Aorta (tissue), 5 donors: ENCODE measurements at regions of chr16 and their contacts with region 1.

Region 1: DNA sequence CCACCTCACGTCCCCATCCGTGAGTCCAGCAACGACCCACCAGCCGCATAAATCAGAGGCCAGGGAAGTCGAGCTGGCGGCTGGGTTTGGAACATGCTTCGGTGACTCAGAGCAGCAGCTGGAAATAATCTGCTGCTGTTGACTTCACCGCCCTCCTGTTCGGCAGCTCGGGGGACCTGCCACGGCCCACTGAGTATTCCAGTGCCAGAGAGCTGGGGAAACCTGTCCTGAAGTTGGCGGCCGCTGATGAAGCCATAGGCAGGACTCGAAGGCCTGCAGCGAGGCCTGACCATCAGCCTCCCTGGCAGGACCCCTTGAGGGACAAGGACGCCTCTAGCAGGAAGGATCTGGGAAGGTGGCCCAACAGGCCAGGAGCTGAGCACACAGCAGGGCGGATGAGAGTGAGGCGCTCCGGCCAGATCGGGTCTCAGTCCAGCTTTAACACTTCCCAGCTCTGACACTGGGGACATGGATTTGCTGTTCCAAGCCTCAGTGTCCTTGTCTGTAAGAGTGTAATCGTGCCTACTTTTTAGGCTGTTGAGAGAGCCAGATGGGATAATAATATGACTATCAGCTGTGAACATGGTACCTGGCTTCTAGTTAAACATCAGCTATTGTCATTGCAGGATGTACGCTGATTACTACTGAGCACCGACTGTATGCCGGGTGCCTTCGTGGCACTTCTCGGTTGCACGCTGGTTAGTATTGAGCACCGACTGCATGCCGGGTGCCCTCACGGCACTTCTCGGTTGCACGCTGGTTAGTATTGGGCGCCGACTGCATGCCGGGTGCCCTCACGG is 50.4 kb upstream of the CIBAR2 start:
- DNase-seq: peak; percentile 88 to 90
- ATAC-seq: peak; percentile 65
- H3K4me3 ChIP-seq: no peak overlapping the region
- H3K27ac ChIP-seq: peak overlapping the region in 1 of 2 donors; percentile 26
- H3K4me1 ChIP-seq: peaks cover 0 to 3% of the 10 kb centered on the region in 2 donors
- H3K27me3 ChIP-seq: no peaks in the 10 kb centered on the region

Region 2: GRCh38 chr16:85055503-85056210 is 107.0 kb before region 1 on chr16:
- intact Hi-C with region 1: no loop called
- DNase-seq: peak in 1 of 2 donors; percentile 80
- ATAC-seq: peak; percentile 80
- H3K4me3 ChIP-seq: no peak overlapping the region
- H3K27ac ChIP-seq: no peak overlapping the region
- H3K4me1 ChIP-seq: no peaks in the 10 kb centered on the region
- H3K27me3 ChIP-seq: no peaks in the 10 kb centered on the region

Region 3: GRCh38 chr16:85195900-85196772 is 33.5 kb after region 1 on chr16:
- intact Hi-C with region 1: loop called (anchors 5 kb)
- DNase-seq: peak in 1 of 2 donors; percentile 75
- ATAC-seq: peak; percentile 79
- H3K4me3 ChIP-seq: no peak overlapping the region
- H3K27ac ChIP-seq: peak overlapping the region in 1 of 2 donors; percentile 9
- H3K4me1 ChIP-seq: no peaks in the 10 kb centered on the region
- H3K27me3 ChIP-seq: no peaks in the 10 kb centered on the region